Endothelial cell of umbilical vein (primary cell): ENCODE measurements at regions of chr15 and their contacts with region 1.

Region 1: GRCh38 chr15:79505956-79506355 is 73.8 kb downstream of the MINAR1 start:
- DNase-seq: no peak
- H3K4me3 ChIP-seq: no peak overlapping the region
- H3K27ac ChIP-seq: no peak overlapping the region
- H3K4me1 ChIP-seq: no peaks in the 10 kb centered on the region
- H3K27me3 ChIP-seq: no peaks in the 10 kb centered on the region
- CTCF ChIP-seq: no peak
- POLR2A ChIP-seq: no peak

Region 2: DNA sequence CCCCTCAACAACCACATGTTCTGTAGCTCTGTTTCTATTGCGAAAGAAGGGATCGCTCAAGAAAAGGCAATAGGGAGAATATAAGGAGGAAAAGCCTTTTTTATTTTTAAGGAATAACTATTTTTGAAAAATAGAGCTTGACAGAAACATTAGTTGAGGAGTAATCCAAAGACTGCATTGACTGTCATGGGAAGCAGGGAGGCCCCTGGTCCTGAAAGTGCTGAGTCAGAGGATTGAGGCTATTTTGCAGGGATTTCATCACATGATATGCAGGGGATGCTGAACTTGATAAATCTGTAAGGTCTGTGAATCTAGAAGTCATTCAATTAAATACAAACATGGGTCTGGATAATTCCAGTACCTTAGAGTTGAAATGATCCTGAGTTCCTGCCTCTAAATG is 298.9 kb after region 1 on chr15:
- CTCF ChIA-PET with region 1: no interaction called
- POLR2A ChIA-PET with region 1: no interaction called
- dilution Hi-C with region 1: no loop called
- intact Hi-C with region 1: no loop called
- DNase-seq: no peak
- H3K4me3 ChIP-seq: no peak overlapping the region
- H3K27ac ChIP-seq: no peak overlapping the region
- H3K4me1 ChIP-seq: no peaks in the 10 kb centered on the region
- H3K27me3 ChIP-seq: no peaks in the 10 kb centered on the region
- CTCF ChIP-seq: no peak
- POLR2A ChIP-seq: no peak

Region 3: DNA sequence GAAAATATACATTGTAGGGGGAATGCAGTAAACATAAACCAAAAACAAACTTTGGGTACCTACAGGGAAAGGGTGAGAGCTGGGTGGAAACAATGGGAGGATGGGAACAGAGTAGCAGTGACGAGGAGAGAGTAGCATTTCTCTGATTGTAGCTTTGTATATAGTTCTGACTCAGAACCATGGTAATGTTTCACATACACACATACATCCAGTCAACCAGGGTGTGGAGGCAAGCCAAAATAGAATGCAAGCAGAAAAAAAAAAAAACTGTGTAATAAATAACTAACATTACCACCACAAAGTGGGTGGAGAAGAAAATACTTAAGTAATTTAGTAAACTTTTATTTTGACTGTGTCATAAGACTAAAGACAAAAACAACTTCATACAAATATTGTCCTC is 437.9 kb after region 1 on chr15:
- CTCF ChIA-PET with region 1: no interaction called
- POLR2A ChIA-PET with region 1: no interaction called
- dilution Hi-C with region 1: no loop called
- intact Hi-C with region 1: loop called (anchors 5 kb)
- DNase-seq: no peak
- H3K4me3 ChIP-seq: no peak overlapping the region
- H3K27ac ChIP-seq: no peak overlapping the region
- H3K4me1 ChIP-seq: no peaks in the 10 kb centered on the region
- H3K27me3 ChIP-seq: peaks cover 0 to 3% of the 10 kb centered on the region in 2 experiments
- CTCF ChIP-seq: no peak
- POLR2A ChIP-seq: no peak